ENCODE measurements at regions of chr21 and their contacts with region 1.

Region 1: GRCh38 chr21:36847171-36847570 is 119.3 kb downstream of the HLCS start:
- DNase-seq: peak in 1 of 2 experiments; percentile 62
- H3K4me3 ChIP-seq: no peak overlapping the region
- H3K27ac ChIP-seq: no peak overlapping the region
- H3K4me1 ChIP-seq: peaks cover 10% of the 10 kb centered on the region
- H3K27me3 ChIP-seq: no peaks in the 10 kb centered on the region
- CTCF ChIP-seq: no peak

Region 2: GRCh38 chr21:36727866-36728265 is 119.3 kb before region 1 on chr21:
- CTCF ChIA-PET with region 1: no interaction called
- POLR2A ChIA-PET with region 1: no interaction called
- intact Hi-C with region 1: no loop called
- DNase-seq: no peak
- H3K4me3 ChIP-seq: no peak overlapping the region
- H3K27ac ChIP-seq: no peak overlapping the region
- H3K4me1 ChIP-seq: no peaks in the 10 kb centered on the region
- H3K27me3 ChIP-seq: no peaks in the 10 kb centered on the region
- CTCF ChIP-seq: no peak

Region 3: GRCh38 chr21:36773117-36773516 is 74.1 kb before region 1 on chr21:
- CTCF ChIA-PET with region 1: no interaction called
- POLR2A ChIA-PET with region 1: no interaction called
- intact Hi-C with region 1: loop called (anchors 5 kb)
- DNase-seq: peak; percentile 68 to 82
- H3K4me3 ChIP-seq: no peak overlapping the region
- H3K27ac ChIP-seq: no peak overlapping the region
- H3K4me1 ChIP-seq: no peaks in the 10 kb centered on the region
- H3K27me3 ChIP-seq: no peaks in the 10 kb centered on the region
- CTCF ChIP-seq: no peak